Left ventricle myocardium inferior (tissue), 1 donor: ENCODE measurements at regions of chr7 and their contacts with region 1.

Region 1: DNA sequence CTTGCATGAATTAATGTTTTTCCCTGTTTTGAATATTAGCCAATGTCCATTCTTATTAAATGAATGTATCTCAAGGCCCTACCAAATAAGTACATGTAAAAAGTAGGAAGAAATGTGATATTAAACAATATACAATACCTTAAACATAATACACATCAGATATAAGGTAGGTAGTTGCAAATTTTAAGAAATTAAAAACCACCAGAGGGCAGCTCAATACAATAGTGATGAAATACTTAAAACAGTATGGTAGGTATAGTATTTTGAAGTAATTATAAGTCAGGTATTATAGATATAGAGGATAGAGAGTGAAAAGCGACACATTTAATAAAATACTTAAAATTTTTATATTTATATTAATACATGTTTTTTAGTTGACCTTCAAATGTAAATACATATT is 43.6 kb upstream of the CDK14 start:
- DNase-seq: no peak
- H3K4me3 ChIP-seq: no peak overlapping the region
- H3K27ac ChIP-seq: no peak overlapping the region
- H3K4me1 ChIP-seq: no peaks in the 10 kb centered on the region
- H3K27me3 ChIP-seq: no peaks in the 10 kb centered on the region
- CTCF ChIP-seq: peak; percentile 58

Region 2: DNA sequence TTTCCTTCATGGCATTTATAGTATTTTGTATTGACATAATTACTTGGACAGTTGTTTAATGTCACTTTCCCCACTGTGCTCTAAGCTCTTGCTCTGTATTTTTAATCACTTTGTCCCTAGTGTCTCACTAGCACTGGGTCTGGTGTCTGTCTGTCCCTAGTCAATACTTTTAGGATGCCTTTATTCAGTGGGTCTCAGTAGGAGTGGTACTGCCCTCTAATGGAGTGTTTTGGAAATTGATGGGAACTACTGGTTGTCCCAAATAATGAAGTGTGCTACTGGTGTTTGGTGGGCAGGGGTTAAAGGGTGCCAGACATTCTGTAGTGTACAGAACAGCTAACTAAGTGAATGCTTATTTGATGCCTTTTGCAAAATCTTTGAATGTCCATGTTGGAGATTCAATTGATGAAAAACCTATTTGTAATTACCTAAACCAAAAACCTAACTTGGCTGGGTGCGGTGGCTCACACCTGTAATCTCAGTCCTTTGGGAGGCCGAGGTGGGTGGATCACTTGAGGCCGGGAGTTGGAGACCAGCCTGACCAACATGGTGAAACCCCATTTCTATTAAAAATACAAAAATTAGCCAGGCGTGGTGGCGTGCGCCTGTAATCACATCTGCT is 76.9 kb after region 1 on chr7:
- intact Hi-C with region 1: loop called (anchors 10 kb)
- DNase-seq: no peak
- H3K4me3 ChIP-seq: no peak overlapping the region
- H3K27ac ChIP-seq: peak overlapping the region; percentile 30
- H3K4me1 ChIP-seq: peaks cover 24% of the 10 kb centered on the region
- H3K27me3 ChIP-seq: no peaks in the 10 kb centered on the region
- CTCF ChIP-seq: peak; percentile 77